Activated CD8-positive, alpha-beta T cell treated with anti-CD3 and anti-CD28 coated beads for 36 hours (primary cell): ENCODE measurements at regions of chr1 and their contacts with region 1.

Region 1: GRCh38 chr1:226121587-226122400 is 59.3 kb downstream of the H3-3A start:
- DNase-seq: peak; percentile 71
- ATAC-seq: peak; percentile 74
- H3K4me3 Mint-ChIP-seq: peak overlapping the region; percentile 76
- H3K27ac Mint-ChIP-seq: peak overlapping the region; percentile 88
- H3K4me1 Mint-ChIP-seq: peaks cover 25% of the 10 kb centered on the region
- H3K27me3 Mint-ChIP-seq: no peaks in the 10 kb centered on the region
- CTCF ChIP-seq: peak; percentile 83

Region 2: GRCh38 chr1:225987491-225988316 is 134.1 kb before region 1 on chr1:
- CTCF ChIA-PET with region 1: interaction called, 10 read pairs
- POLR2A ChIA-PET with region 1: interaction called, 3 read pairs
- intact Hi-C with region 1: no loop called
- DNase-seq: no peak
- ATAC-seq: peak; percentile 63
- H3K4me3 Mint-ChIP-seq: no peak overlapping the region
- H3K27ac Mint-ChIP-seq: no peak overlapping the region
- H3K4me1 Mint-ChIP-seq: peaks cover 34% of the 10 kb centered on the region
- H3K27me3 Mint-ChIP-seq: no peaks in the 10 kb centered on the region
- CTCF ChIP-seq: peak; percentile 78

Region 3: GRCh38 chr1:226092965-226093364 is 28.8 kb before region 1 on chr1:
- CTCF ChIA-PET with region 1: interaction called, 11 read pairs
- POLR2A ChIA-PET with region 1: no interaction called
- intact Hi-C with region 1: no loop called
- DNase-seq: no peak
- ATAC-seq: no peak
- H3K4me3 Mint-ChIP-seq: no peak overlapping the region
- H3K27ac Mint-ChIP-seq: no peak overlapping the region
- H3K4me1 Mint-ChIP-seq: no peaks in the 10 kb centered on the region
- H3K27me3 Mint-ChIP-seq: no peaks in the 10 kb centered on the region
- CTCF ChIP-seq: no peak

Region 4: GRCh38 chr1:226149806-226150205 is 28.0 kb after region 1 on chr1:
- CTCF ChIA-PET with region 1: interaction called, 26 read pairs
- POLR2A ChIA-PET with region 1: no interaction called
- intact Hi-C with region 1: no loop called
- DNase-seq: no peak
- ATAC-seq: peak; percentile 10
- H3K4me3 Mint-ChIP-seq: no peak overlapping the region
- H3K27ac Mint-ChIP-seq: no peak overlapping the region
- H3K4me1 Mint-ChIP-seq: no peaks in the 10 kb centered on the region
- H3K27me3 Mint-ChIP-seq: no peaks in the 10 kb centered on the region
- CTCF ChIP-seq: no peak

Region 5: GRCh38 chr1:226201029-226201593 is 79.3 kb after region 1 on chr1:
- CTCF ChIA-PET with region 1: interaction called, 175 read pairs
- POLR2A ChIA-PET with region 1: interaction called, 4 read pairs
- intact Hi-C with region 1: loop called (anchors 1 kb)
- DNase-seq: peak; percentile 23
- ATAC-seq: no peak
- H3K4me3 Mint-ChIP-seq: no peak overlapping the region
- H3K27ac Mint-ChIP-seq: no peak overlapping the region
- H3K4me1 Mint-ChIP-seq: peaks cover 2% of the 10 kb centered on the region
- H3K27me3 Mint-ChIP-seq: peaks cover 4% of the 10 kb centered on the region
- CTCF ChIP-seq: no peak

Region 6: GRCh38 chr1:226332947-226333346 is 211.2 kb after region 1 on chr1:
- CTCF ChIA-PET with region 1: interaction called, 68 read pairs
- POLR2A ChIA-PET with region 1: no interaction called
- intact Hi-C with region 1: loop called (anchors 2 kb)
- DNase-seq: no peak
- ATAC-seq: no peak
- H3K4me3 Mint-ChIP-seq: peak overlapping the region; percentile 37
- H3K27ac Mint-ChIP-seq: no peak overlapping the region
- H3K4me1 Mint-ChIP-seq: peaks cover 10% of the 10 kb centered on the region
- H3K27me3 Mint-ChIP-seq: no peaks in the 10 kb centered on the region
- CTCF ChIP-seq: no peak